AG04449 (cell line): ENCODE measurements at regions of chr13 and their contacts with region 1.

Region 1: GRCh38 chr13:46759846-46760245 is 37.1 kb downstream of the ESD start:
- DNase-seq: no peak
- H3K4me3 ChIP-seq: no peak overlapping the region
- CTCF ChIP-seq: no peak

Region 2: DNA sequence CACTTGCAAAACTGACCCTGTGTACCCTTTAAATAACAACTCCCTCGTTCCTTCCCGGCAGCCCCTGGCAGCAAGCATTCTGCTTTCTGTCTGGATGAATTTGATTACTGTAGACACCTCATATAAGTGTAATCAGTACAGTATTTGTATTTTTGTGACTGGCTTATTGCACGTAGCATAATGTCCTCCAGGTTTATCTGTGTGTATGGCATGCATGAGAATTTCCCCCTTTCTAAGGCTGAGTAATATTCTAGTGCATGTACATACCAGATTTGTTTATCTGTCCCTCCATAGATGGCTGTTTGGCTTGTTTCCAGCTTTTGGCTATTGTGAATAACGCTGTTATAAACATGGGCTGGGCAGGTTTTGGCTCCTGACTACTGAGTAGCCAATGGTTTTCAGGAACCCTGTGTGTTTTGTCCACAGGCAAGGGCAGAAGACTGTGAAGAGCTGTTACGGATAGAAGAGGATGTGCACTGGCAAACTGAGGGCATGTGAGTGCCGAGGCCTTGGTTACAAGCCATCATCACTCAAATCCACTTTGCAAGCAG is 60.9 kb before region 1 on chr13:
- CTCF ChIA-PET with region 1: no interaction called
- POLR2A ChIA-PET with region 1: no interaction called
- DNase-seq: no peak
- H3K4me3 ChIP-seq: no peak overlapping the region
- CTCF ChIP-seq: no peak

Region 3: GRCh38 chr13:46775385-46776107 is 15.7 kb after region 1 on chr13:
- CTCF ChIA-PET with region 1: interaction called, 29 read pairs
- POLR2A ChIA-PET with region 1: no interaction called
- DNase-seq: no peak
- H3K4me3 ChIP-seq: no peak overlapping the region
- CTCF ChIP-seq: no peak

Region 4: DNA sequence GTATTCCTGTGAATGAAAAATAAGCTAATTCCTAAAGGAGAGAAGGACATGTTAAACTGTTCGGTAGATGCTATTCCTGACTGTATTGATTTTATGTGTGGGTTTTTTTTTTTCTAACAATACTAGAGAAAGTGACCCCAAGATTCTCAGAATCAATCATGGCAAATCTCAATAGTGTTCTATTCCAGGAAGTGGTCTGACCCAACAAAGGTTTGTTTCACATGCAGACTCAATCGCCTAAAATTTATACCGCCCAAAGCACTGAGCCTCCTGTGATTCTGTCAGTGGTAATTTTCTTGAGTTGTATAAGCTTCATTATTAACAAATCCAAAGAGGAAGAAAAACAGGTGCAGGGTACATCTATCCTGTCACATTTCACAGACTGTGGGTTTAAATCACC is 947.6 kb after region 1 on chr13:
- CTCF ChIA-PET with region 1: no interaction called
- POLR2A ChIA-PET with region 1: no interaction called
- DNase-seq: no peak
- H3K4me3 ChIP-seq: no peak overlapping the region
- CTCF ChIP-seq: no peak